ENCODE measurements at regions of chr15 and their contacts with region 1.

Region 1: DNA sequence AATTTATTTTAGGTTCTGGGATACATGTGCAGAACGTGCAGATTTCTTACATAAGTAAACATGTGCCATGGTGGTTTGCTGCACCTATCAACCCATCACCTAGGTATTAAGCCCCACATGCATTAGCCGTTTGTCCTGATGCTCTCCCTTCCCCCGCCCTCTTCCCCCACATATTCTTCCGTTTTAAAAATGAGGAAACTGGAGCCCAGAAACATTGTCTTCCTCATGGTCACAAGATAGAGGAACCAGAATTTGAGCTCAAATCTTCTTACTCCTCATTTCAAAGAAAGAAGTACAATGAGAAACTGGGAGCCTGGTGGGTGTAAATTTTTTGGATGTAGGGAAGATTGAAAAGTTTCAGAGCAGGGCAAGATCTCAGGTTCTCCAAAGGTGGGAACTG is 56.1 kb upstream of the USP3 start:
- DNase-seq: no peak
- H3K4me3 ChIP-seq: no peak overlapping the region
- CTCF ChIP-seq: no peak

Region 2: DNA sequence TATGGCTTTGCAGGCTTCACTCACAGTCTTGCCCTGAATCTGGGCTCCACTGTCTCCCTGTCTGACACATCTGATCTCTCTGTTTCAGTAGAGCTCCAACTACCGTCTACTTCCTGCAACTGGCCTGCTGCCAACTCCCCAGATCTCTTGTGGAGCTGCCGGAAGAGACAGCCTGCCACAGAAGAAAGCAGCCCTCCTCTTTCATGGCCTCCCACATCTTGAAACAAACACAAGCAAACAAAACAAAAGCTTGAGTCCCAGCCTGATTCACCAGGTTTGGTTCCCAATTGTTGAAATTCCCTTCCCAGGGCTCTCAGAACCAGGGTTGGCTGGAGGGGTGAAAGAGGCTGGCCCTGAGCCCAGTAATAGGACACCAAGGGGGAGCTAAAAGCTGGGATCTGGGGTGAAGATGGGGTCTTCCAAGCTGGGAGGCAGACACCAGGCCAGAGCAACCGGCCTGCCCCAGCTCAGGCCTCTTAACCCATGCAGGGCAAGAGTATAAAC is 11.3 kb before region 1 on chr15:
- CTCF ChIA-PET with region 1: interaction called, 11 read pairs
- POLR2A ChIA-PET with region 1: no interaction called
- DNase-seq: peak; percentile 37
- H3K4me3 ChIP-seq: no peak overlapping the region
- CTCF ChIP-seq: no peak